Activated naive CD4-positive, alpha-beta T cell treated with anti-CD3 and anti-CD28 coated beads for 36 hours (primary cell): ENCODE measurements at regions of chr1 and their contacts with region 1.

Region 1: DNA sequence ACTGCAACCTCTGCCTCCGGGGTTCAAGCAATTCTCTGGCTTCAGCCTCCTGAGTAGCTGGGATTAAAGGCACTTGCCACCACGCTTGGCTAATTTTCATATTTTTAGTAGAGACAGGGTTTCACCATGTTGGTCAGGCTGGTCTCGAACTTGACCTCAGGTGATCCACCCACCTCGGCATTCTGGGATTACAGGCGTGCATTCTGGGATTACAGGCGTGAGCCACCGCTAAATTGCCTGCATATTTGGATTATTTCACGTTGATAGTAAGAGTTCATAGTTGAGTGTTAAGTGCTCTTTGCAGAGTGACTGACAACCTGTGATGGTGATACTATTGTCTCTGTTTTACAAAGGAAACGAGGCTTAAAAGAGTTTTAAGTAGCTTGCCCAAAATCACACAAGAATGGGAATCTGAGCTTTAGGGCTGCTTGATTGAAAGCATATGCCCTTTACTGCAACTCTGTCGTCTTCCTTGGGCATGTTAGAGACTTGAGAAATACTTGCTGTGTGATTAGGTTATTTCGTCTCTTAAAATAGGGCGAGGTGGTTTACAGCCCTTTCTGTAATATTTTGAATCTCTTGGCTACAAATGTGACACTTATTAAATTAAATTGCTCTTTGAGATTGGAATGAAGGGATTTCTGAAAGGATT is 12.4 kb downstream of the CDC42 start:
- DNase-seq: no peak
- H3K4me3 Mint-ChIP-seq: no peak overlapping the region
- H3K27ac Mint-ChIP-seq: peak overlapping the region; percentile 67
- H3K4me1 Mint-ChIP-seq: peaks cover 84% of the 10 kb centered on the region
- H3K27me3 Mint-ChIP-seq: no peaks in the 10 kb centered on the region

Region 2: GRCh38 chr1:22045604-22046228 is 19.2 kb before region 1 on chr1:
- CTCF ChIA-PET with region 1: interaction called, 3 read pairs
- intact Hi-C with region 1: loop called (anchors 1 kb)
- DNase-seq: no peak
- H3K4me3 Mint-ChIP-seq: no peak overlapping the region
- H3K27ac Mint-ChIP-seq: peak overlapping the region; percentile 20
- H3K4me1 Mint-ChIP-seq: peaks cover 57% of the 10 kb centered on the region
- H3K27me3 Mint-ChIP-seq: no peaks in the 10 kb centered on the region

Region 3: GRCh38 chr1:22728751-22729399 is 664.0 kb after region 1 on chr1:
- CTCF ChIA-PET with region 1: no interaction called
- intact Hi-C with region 1: no loop called
- DNase-seq: no peak
- H3K4me3 Mint-ChIP-seq: no peak overlapping the region
- H3K27ac Mint-ChIP-seq: no peak overlapping the region
- H3K4me1 Mint-ChIP-seq: no peaks in the 10 kb centered on the region
- H3K27me3 Mint-ChIP-seq: peaks cover 4% of the 10 kb centered on the region